ENCODE measurements at regions of chr5 and their contacts with region 1.

Region 1: DNA sequence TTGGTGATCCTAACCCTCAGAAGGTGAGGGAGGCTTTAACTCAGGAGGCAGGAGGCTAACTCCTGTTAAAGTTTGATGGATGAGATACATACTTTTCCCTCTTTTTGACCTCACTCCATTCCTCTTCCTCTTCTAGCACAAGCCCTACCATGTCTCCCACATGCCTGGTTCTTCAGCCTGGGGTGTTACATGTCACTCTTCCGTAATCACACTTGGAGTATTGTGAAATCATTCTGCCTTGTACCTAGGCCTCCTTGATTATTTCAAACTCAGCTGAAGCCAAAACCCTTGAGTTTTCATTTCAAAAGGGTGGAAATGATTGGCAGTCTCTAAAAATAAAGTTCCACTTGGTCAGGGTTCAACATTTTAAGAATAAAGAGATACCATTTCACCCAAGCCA is 1.8 kb downstream of the PLAC8L1 start:
- DNase-seq: peak in 1 of 5 donors; percentile 40
- ATAC-seq: peak; percentile 82 to 96 (median 90)
- H3K4me3 ChIP-seq: no peak overlapping the region
- H3K27ac ChIP-seq: peak overlapping the region in 9 of 12 donors; percentile 20 to 74 (median 58)
- H3K4me1 ChIP-seq: peaks cover 0 to 14% (median 0%) of the 10 kb centered on the region in 12 donors
- H3K27me3 ChIP-seq: no peaks in the 10 kb centered on the region
- CTCF ChIP-seq: no peak
- POLR2A ChIP-seq: no peak

Region 2: GRCh38 chr5:146073239-146073900 is 30.2 kb before region 1 on chr5:
- intact Hi-C with region 1: loop called in 2 of 10 experiments (anchors 2 kb)
- DNase-seq: no peak
- ATAC-seq: peak; percentile 14 to 28 (median 20)
- H3K4me3 ChIP-seq: no peak overlapping the region
- H3K27ac ChIP-seq: peak overlapping the region; percentile 2 to 90 (median 78)
- H3K4me1 ChIP-seq: peaks cover 0 to 57% (median 21%) of the 10 kb centered on the region in 12 donors
- H3K27me3 ChIP-seq: no peaks in the 10 kb centered on the region
- CTCF ChIP-seq: no peak
- POLR2A ChIP-seq: no peak

Region 3: DNA sequence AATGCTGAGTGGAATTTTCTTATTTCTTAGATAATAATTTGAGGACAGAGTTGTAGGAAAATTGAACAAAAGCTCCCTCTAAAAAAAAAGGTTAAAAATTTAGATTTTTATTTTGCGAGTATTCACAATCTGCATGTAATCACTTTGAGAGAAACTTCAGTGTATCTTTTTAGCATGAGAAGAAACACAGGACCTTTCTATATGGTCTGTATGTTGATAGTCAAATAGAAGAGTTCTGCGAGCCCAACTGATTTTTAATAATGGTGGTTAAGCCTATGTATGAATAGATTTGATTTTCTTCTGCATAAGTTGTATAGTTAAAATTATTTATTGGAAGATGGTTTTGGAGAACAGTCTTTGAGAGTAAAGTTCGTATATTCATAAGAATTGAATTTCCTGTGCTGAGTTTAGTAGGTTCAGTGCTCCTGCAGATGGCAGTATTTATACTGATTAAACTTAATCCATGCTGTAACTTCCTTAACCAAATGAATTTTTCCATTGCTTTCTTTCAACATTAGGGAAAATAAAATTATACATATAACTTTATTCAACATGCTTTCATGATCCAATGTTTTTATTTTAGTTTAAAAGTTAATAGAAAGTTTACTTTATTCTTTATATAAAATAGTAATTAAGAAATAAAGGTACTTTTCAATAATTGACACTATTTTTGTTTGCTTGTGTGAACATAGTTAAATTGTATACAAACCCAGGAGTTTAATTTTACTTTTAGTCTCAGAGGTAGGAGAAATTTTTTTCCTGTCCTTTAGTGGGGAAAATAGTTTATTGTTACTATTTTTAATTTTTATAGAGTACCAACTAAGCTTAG is 363.1 kb after region 1 on chr5:
- intact Hi-C with region 1: no loop called
- DNase-seq: no peak
- ATAC-seq: no peak
- H3K4me3 ChIP-seq: no peak overlapping the region
- H3K27ac ChIP-seq: no peak overlapping the region
- H3K4me1 ChIP-seq: no peaks in the 10 kb centered on the region
- H3K27me3 ChIP-seq: no peaks in the 10 kb centered on the region
- CTCF ChIP-seq: peak in 9 of 12 donors; percentile 13 to 60 (median 36)
- POLR2A ChIP-seq: no peak

Measured in heart left ventricle (tissue), 16 donors.